ENCODE measurements at regions of chr1 and their contacts with region 1.

Region 1: GRCh38 chr1:21232044-21232443 is 55.3 kb upstream of the EIF4G3 start:
- DNase-seq: peak; percentile 45
- H3K4me3 ChIP-seq: no peak overlapping the region
- H3K27ac ChIP-seq: no peak overlapping the region
- H3K4me1 ChIP-seq: no peaks in the 10 kb centered on the region
- CTCF ChIP-seq: peak; percentile 94

Region 2: DNA sequence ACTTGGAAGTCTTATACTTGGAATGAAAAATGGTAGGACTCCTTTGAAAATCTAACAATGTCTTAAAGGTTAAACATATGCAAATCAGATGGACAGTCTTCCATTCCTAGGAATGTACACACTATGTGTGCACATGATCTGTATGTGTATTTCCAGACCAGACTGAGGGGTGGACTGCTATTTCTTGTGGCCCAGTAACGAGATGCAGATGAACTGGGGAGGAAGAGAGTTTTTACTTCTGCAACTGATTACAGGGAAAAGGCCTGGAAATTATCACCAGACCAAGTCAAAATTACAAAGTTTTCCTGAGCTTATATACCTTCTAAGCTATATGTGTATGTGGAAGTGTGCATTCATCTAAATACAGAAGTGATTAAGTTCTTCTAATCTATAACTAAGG is 225.6 kb after region 1 on chr1:
- CTCF ChIA-PET with region 1: no interaction called
- POLR2A ChIA-PET with region 1: no interaction called
- intact Hi-C with region 1: no loop called
- DNase-seq: no peak
- H3K4me3 ChIP-seq: no peak overlapping the region
- H3K27ac ChIP-seq: no peak overlapping the region
- H3K4me1 ChIP-seq: no peaks in the 10 kb centered on the region
- CTCF ChIP-seq: no peak

Region 3: GRCh38 chr1:21659099-21659923 is 427.3 kb after region 1 on chr1:
- CTCF ChIA-PET with region 1: no interaction called
- POLR2A ChIA-PET with region 1: no interaction called
- intact Hi-C with region 1: loop called (anchors 5 kb)
- DNase-seq: peak; percentile 65
- H3K4me3 ChIP-seq: no peak overlapping the region
- H3K27ac ChIP-seq: no peak overlapping the region
- H3K4me1 ChIP-seq: no peaks in the 10 kb centered on the region
- CTCF ChIP-seq: peak; percentile 84